Activated T-helper 2 cell treated with anti-CD3 and anti-CD28 coated beads, Interferon-gamma antibody, Interleukin-2, Interleukin-4, amounts not matched to agents 10 μg/mL and 5 μg/mL and 100 μg/mL, durations not matched to agents 14 hours and 24 hours and 36 hours (primary cell): ENCODE measurements at regions of chr15 and their contacts with region 1.

Region 1: DNA sequence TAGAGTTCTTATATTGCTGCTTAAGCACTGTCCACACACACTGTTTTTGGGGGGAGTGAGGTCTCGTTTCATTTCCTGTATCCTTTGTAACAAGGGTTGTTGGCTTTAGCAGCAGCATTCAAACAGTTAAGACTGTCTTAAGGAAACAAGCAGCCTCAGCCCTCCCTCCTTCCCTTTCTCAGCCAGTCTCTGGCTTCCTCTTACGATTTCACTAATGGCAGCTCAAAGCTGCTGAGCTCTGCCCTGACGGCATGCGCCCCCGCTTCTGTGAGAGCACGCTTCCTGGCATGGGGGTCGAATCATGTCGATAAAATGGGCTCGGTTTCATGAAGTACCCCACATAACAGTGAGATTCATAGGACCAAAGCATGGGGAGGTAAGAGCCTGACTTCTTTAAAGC is 105.0 kb downstream of the KLHL25 start:
- DNase-seq: peak; percentile 64
- H3K4me3 Mint-ChIP-seq: peak overlapping the region; percentile 94
- H3K27ac Mint-ChIP-seq: peak overlapping the region; percentile 100
- H3K4me1 Mint-ChIP-seq: peaks cover 70% of the 10 kb centered on the region
- H3K27me3 Mint-ChIP-seq: no peaks in the 10 kb centered on the region

Region 2: GRCh38 chr15:85702321-85703101 is 12.8 kb after region 1 on chr15:
- intact Hi-C with region 1: loop called (anchors 1 kb)
- DNase-seq: peak; percentile 39
- H3K4me3 Mint-ChIP-seq: peak overlapping the region; percentile 77
- H3K27ac Mint-ChIP-seq: peak overlapping the region; percentile 99
- H3K4me1 Mint-ChIP-seq: peaks cover 51% of the 10 kb centered on the region
- H3K27me3 Mint-ChIP-seq: no peaks in the 10 kb centered on the region

Region 3: DNA sequence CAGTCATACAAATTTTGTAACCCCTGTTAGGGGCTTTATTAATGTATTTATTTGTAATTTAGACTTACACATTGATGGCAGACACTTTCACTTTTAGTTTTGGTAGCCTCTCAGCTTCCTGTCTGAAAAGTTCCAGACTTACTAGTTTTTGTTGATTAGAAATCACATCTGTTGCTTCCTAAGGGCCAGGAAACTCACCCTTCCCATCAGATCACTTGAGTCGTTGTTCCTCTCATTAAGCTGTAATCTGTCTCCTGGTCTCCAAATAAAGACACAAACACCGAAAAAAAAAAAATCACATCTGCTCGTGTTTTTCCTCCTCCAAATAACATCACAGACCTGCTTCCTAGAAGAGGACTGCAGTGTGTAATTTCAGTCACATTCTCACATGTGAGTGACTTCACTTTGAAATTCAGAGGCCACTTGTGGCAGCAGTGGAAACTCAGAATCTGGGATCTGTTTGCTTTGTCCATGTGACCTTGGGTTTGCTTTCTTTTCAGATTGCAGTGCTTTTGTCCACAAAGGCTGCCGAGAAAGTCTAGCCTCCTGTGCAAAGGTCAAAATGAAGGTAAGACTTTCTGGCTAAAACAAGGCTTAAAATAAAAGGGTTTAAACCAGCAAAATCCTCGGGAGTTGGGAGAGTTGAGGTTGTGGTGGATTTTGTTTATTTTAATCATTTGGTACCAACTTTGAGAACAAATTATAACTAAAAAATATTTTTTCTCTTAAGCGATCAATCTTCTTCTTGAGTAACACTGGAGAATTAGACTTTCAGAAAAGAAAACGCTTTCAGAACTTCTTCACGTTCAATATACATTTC is 18.0 kb after region 1 on chr15:
- intact Hi-C with region 1: loop called (anchors 1 kb)
- DNase-seq: no peak
- H3K4me3 Mint-ChIP-seq: peak overlapping the region; percentile 80
- H3K27ac Mint-ChIP-seq: peak overlapping the region; percentile 98
- H3K4me1 Mint-ChIP-seq: peaks cover 74% of the 10 kb centered on the region
- H3K27me3 Mint-ChIP-seq: no peaks in the 10 kb centered on the region